Activated CD4-positive, alpha-beta T cell treated with anti-CD3 and anti-CD28 coated beads, Interleukin-2, amount 10 ng/mL, durations not matched to agents 24 days and 14 days (primary cell): ENCODE measurements at regions of chr10 and their contacts with region 1.

Region 1: GRCh38 chr10:24674892-24675632 is 48.6 kb downstream of the ARHGAP21 start:
- DNase-seq: no peak
- H3K4me3 Mint-ChIP-seq: no peak overlapping the region
- H3K27ac Mint-ChIP-seq: peak overlapping the region; percentile 18
- H3K4me1 Mint-ChIP-seq: peaks cover 22% of the 10 kb centered on the region
- H3K27me3 Mint-ChIP-seq: no peaks in the 10 kb centered on the region

Region 2: DNA sequence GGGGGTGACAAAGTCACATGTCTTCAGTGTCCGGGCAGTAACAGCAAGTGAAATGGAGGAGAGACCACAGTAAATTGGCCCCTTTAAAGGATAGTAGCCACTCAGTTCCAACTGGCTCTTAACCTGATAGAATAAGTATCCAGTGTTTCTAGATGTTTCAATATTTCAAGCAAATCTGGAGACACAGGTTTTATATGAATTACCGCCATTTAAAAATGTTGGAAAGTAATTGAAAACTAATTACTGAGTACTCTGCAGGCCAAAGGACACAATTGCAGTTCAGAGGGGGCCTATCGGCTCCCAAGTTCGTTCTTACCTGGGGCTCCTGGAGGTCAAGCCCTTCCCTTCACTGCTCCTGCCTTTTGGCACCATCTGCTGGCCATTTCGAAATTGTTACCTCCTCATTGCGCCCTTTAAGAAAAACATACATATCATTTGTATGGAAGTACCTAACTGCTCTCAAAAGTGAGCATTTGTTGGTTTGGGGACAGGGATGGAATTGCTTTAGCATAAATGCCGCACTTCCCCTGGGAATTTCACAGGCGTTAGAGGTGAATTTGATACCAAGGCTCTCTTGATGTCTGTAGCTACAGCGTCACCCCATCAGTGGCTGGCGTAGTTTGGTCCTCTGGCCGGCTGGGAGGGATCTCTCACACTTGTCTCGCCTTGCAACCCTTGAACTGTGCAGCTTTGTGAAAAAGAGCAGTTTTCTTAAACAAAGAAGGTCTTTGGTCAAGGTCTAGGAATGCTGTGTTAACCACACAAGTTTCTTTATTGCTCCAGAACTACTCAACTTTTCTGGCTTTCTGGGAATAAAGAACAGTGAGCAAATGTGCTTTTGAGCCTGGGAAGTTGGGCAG is 171.4 kb before region 1 on chr10:
- intact Hi-C with region 1: no loop called
- DNase-seq: peak; percentile 78
- H3K4me3 Mint-ChIP-seq: no peak overlapping the region
- H3K27ac Mint-ChIP-seq: no peak overlapping the region
- H3K4me1 Mint-ChIP-seq: no peaks in the 10 kb centered on the region
- H3K27me3 Mint-ChIP-seq: no peaks in the 10 kb centered on the region

Region 3: DNA sequence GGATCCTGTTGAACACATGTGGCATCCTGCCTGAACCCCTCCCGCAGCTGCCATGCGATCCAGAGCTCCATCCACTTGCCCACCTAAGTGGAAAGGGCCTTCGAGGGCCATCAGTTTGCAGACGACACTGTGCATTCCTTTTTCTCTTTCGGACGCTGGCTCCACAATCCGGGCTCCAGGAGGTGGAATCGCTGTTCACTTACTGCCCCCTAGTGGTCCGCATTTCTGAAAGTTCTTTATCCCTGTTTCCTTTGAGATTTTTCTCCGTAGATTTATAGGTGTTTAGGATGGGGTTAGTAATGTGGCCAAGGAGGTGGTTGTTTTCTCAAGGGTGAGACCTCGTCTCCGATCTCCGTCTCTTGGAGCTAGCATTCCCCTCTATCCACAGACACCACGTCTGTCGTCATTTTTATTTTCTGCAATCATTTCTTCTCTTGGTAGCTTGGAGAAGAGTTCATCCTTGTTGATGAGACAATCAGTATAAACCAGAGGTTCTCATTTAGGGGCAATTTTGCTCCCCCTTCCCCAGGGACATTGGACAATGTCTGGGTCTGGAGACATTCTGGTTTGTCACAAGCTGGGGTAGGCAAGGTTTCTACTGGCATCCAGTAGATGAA is 156.0 kb before region 1 on chr10:
- intact Hi-C with region 1: no loop called
- DNase-seq: peak; percentile 81
- H3K4me3 Mint-ChIP-seq: peak overlapping the region; percentile 2
- H3K27ac Mint-ChIP-seq: no peak overlapping the region
- H3K4me1 Mint-ChIP-seq: peaks cover 11% of the 10 kb centered on the region
- H3K27me3 Mint-ChIP-seq: no peaks in the 10 kb centered on the region

Region 4: DNA sequence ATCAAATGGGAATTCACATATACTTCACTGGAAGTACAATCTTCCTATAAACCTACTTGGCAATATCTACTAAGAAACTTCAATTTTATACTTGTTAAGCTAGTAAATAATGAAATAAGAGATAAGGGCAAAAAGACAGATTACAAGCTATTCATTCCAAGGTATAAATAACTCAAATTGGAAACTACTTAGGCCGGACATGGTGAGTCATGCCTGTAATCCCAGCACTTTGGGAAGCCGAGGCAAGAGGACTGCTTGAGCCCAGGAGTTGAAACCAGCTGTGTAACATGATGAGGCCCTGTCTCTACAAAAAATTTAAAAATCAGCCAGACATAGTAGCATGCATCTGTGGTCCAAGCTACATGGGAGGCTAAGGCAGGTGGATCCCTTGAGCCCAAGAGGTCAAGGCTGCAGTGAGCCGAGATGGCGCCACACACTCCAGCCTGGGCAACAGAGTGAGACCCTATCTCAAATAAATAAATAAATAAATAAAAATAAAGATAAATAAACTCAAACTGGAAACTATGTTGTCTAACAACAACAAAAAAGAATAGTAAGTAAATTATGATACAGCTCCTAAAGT is 11.0 kb after region 1 on chr10:
- intact Hi-C with region 1: no loop called
- DNase-seq: no peak
- H3K4me3 Mint-ChIP-seq: no peak overlapping the region
- H3K27ac Mint-ChIP-seq: no peak overlapping the region
- H3K4me1 Mint-ChIP-seq: peaks cover 5% of the 10 kb centered on the region
- H3K27me3 Mint-ChIP-seq: no peaks in the 10 kb centered on the region

Region 5: GRCh38 chr10:24706479-24707118 is 31.5 kb after region 1 on chr10:
- intact Hi-C with region 1: loop called (anchors 5 kb)
- DNase-seq: peak; percentile 78
- H3K4me3 Mint-ChIP-seq: no peak overlapping the region
- H3K27ac Mint-ChIP-seq: no peak overlapping the region
- H3K4me1 Mint-ChIP-seq: peaks cover 22% of the 10 kb centered on the region
- H3K27me3 Mint-ChIP-seq: no peaks in the 10 kb centered on the region